Right ventricle myocardium superior (tissue), 1 donor: ENCODE measurements at regions of chr10 and their contacts with region 1.

Region 1: DNA sequence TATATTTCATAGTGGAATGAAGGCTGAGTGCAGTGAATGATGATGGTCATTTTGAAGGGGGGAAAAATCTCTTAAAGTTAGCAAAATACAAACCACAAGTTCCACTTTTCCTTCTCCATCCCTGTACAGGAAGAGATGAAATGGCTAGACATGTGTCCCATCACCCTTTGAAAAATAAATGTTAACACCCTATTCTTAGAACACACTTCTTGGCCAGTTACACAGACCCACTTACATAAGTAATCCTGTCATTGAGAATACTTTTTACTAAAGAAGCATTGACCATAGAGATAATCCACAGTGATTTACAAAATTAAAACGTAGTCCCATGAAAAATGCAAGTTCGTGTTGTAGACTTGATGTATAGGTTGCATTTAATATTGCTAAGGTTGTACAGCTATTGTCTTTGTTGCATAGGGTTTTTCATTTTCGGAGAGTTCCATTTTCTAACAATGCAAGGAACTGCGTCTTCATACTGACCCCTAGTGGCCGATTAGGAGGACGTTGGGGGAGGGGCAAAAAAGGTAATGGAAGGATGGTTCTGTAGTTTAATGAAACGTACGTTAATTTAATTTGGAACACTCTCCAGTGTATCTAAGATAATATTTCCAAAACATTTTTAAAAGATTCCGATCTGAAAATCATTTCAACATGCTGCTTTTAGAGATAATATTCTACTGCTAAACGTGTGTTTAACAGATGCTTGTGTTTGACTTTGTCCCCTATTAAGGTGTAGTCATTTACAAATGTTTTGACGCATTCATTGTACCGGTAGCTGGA is 60.9 kb downstream of the ARMC3 start:
- DNase-seq: no peak
- ATAC-seq: peak; percentile 92

Region 2: GRCh38 chr10:21989453-21990154 is 999.2 kb before region 1 on chr10:
- intact Hi-C with region 1: loop called (anchors 5 kb)
- DNase-seq: peak; percentile 61
- ATAC-seq: peak; percentile 90

Region 3: DNA sequence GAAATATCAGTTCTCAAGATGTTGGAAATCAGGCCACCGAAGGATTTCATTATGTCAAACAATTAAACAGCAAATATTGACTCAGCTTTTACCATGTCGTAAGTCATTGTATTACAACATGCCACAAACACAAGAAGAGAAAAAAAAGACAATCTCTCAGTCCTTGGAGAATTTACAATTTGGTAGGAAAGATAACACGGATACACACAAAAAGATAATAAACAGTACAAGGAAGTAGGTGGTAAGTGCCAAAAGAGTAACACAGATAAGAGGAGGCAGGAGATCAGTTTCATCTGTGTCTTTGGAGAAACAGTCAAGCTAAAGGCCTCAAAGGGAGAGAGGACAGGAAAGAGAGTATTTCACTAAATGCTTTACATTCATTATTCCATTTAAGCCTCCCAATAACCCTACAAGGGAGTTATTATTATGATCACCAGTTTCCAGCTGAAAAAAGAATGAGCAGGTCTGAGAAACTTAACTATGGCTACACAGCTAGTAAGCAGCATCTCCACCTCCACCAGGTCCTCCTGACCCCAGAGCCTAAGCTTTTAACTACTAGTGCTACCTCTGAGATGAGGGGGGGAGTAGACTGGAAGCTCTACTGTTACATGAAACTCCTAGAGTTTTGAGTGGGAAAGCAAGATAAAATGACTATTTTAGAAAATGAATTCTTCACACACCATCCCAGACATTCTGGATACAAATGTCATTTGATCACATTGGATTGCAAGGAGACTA is 971.3 kb before region 1 on chr10:
- intact Hi-C with region 1: loop called (anchors 5 kb)
- DNase-seq: no peak
- ATAC-seq: no peak

Region 4: DNA sequence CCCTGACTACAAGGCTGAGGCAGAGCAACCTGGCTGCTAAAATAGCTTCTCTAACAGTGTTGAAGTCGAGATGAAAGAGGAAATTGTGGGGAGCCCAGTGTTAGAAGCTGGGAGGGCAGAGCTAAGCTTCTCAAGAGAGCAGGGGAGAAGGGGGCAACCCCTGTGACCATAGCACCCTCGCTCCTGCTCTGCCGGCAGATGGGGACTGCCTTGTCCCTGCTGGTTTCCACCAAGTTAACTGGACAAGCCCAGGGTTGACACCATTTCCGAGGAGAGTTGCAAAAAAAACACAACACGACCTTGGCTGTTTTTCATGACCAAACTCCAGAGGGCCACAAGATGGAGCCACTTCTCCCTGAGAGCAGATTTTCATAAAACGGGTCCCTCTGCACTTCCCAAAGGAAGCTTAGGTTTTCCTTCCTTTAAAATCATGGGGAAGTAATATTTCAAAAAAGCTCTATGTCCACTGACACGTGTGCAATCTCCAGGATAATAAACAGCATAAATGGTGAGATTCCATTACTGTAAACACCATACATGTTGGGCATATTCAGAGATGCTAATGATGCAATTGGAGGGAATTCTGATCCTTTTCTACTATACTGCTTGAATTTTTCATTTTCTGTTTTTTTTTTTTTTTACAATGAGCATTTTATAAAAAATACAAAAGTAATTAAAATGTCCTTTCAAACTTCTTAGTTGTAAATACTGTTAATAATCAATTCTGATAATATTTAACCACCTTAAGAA is 414.8 kb before region 1 on chr10:
- intact Hi-C with region 1: loop called (anchors 10 kb)
- DNase-seq: no peak
- ATAC-seq: no peak

Region 5: GRCh38 chr10:22911889-22912762 is 76.6 kb before region 1 on chr10:
- intact Hi-C with region 1: no loop called
- DNase-seq: no peak
- ATAC-seq: no peak

Region 6: GRCh38 chr10:23136462-23136861 is 147.7 kb after region 1 on chr10:
- intact Hi-C with region 1: no loop called
- DNase-seq: no peak
- ATAC-seq: no peak